ENCODE measurements at regions of chr20 and their contacts with region 1.

Region 1: GRCh38 chr20:32789896-32790750 is 27.9 kb downstream of the DNMT3B start:
- DNase-seq: peak; percentile 89
- H3K4me3 ChIP-seq: peak overlapping the region in 1 of 2 experiments; percentile 49; a peak in 1 of 4 replicates
- H3K27ac ChIP-seq: no peak overlapping the region
- H3K4me1 ChIP-seq: no peaks in the 10 kb centered on the region
- H3K27me3 ChIP-seq: no peaks in the 10 kb centered on the region
- CTCF ChIP-seq: peak; percentile 97
- EP300 ChIP-seq: no peak
- RAD21 ChIP-seq: peak; percentile 87

Region 2: GRCh38 chr20:32772046-32772445 is 18.1 kb before region 1 on chr20:
- CTCF ChIA-PET with region 1: interaction called, 83 read pairs
- POLR2A ChIA-PET with region 1: no interaction called
- DNase-seq: no peak
- H3K4me3 ChIP-seq: no peak overlapping the region
- H3K27ac ChIP-seq: no peak overlapping the region
- H3K4me1 ChIP-seq: peaks cover 0 to 12% of the 10 kb centered on the region in 2 experiments; a peak in 2 of 4 replicates
- H3K27me3 ChIP-seq: no peaks in the 10 kb centered on the region
- CTCF ChIP-seq: no peak
- EP300 ChIP-seq: no peak
- RAD21 ChIP-seq: no peak

Region 3: DNA sequence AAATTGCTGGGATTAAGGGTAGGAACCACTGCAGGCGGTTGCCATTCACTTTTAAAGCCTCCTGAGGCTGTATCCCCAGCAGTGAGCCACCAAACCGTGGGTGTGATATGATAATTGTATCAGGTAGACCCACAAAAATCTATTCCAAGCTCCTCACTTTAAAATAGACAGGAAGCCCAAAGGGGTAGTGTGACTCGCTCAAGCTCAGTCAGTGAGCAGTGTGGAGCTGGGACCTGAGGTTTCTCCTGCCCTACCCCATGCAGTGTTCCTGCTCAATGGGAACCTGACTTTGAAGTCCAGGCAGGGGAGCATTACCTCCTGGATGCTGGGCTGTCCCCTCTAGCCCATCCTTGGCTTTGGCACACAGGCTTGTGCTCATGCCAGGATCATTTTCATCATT is 14.7 kb after region 1 on chr20:
- CTCF ChIA-PET with region 1: interaction called, 27 read pairs
- POLR2A ChIA-PET with region 1: no interaction called
- DNase-seq: no peak
- H3K4me3 ChIP-seq: no peak overlapping the region
- H3K27ac ChIP-seq: no peak overlapping the region
- H3K4me1 ChIP-seq: no peaks in the 10 kb centered on the region
- H3K27me3 ChIP-seq: no peaks in the 10 kb centered on the region
- CTCF ChIP-seq: no peak
- EP300 ChIP-seq: no peak
- RAD21 ChIP-seq: no peak

Region 4: GRCh38 chr20:32819992-32820710 is 30.0 kb after region 1 on chr20:
- CTCF ChIA-PET with region 1: interaction called, 13 read pairs
- POLR2A ChIA-PET with region 1: no interaction called
- DNase-seq: peak; percentile 93
- H3K4me3 ChIP-seq: peak overlapping the region; percentile 80 to 82
- H3K27ac ChIP-seq: peak overlapping the region; percentile 67 to 73
- H3K4me1 ChIP-seq: peaks cover 19 to 24% of the 10 kb centered on the region in 2 experiments; a peak in 2 of 4 replicates
- H3K27me3 ChIP-seq: no peaks in the 10 kb centered on the region
- CTCF ChIP-seq: 0 out of 2 replicates have a peak, but pooled peaks have one; percentile 10
- EP300 ChIP-seq: no peak
- RAD21 ChIP-seq: no peak

Region 5: GRCh38 chr20:33095249-33095648 is 305.1 kb after region 1 on chr20:
- CTCF ChIA-PET with region 1: interaction called, 10 read pairs
- POLR2A ChIA-PET with region 1: no interaction called
- DNase-seq: no peak
- H3K4me3 ChIP-seq: no peak overlapping the region
- H3K27ac ChIP-seq: no peak overlapping the region
- H3K4me1 ChIP-seq: no peaks in the 10 kb centered on the region
- H3K27me3 ChIP-seq: peaks cover 29% of the 10 kb centered on the region; the same call in 1 of the 2 replicates
- CTCF ChIP-seq: no peak
- EP300 ChIP-seq: no peak
- RAD21 ChIP-seq: no peak

Measured in SK-N-SH (cell line).